ENCODE measurements at regions of chr21 and their contacts with region 1.

Region 1: DNA sequence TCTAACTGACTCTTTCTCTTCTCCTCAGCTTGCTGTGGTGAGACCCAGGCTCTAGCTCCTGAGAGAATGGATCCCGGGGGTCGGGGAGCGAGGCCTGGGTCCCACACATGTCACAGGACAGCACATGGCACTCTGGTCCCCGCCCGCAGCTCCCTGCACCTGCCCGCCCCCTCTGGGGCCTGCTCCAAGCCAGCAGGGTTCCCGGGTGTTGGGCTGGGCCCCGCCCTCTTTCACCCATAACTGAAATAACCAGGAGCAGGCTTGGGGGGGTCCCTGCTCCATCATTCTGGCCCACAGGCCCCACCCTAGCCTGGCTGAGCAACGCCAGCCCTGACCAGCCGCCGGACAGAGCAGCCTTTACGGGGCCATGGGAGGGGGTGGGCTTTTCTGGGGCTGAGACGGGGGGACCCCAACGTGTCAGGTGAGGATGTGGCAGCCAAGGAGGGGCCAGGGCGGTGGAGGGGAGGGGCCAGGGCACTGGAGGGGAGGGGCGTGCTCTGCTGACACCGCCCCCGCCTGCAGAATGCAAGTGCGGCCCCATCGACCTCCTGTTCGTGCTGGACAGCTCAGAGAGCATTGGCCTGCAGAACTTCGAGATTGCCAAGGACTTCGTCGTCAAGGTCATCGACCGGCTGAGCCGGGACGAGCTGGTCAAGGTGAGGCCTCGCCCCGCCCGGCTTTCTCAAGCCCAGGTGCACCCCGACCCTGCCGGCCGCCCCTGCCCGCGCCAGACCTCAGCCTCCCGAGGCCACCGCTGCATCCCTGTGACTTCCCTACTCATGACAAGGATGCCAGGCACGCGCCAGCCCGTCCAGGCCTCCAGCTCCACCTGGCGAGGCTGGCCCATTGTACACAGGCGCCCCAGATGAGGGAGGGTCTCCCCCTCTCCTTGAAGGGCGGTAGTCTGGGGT is 19.4 kb downstream of the COL6A1 start:
- DNase-seq: no peak
- H3K4me3 ChIP-seq: no peak overlapping the region
- CTCF ChIP-seq: no peak

Region 2: DNA sequence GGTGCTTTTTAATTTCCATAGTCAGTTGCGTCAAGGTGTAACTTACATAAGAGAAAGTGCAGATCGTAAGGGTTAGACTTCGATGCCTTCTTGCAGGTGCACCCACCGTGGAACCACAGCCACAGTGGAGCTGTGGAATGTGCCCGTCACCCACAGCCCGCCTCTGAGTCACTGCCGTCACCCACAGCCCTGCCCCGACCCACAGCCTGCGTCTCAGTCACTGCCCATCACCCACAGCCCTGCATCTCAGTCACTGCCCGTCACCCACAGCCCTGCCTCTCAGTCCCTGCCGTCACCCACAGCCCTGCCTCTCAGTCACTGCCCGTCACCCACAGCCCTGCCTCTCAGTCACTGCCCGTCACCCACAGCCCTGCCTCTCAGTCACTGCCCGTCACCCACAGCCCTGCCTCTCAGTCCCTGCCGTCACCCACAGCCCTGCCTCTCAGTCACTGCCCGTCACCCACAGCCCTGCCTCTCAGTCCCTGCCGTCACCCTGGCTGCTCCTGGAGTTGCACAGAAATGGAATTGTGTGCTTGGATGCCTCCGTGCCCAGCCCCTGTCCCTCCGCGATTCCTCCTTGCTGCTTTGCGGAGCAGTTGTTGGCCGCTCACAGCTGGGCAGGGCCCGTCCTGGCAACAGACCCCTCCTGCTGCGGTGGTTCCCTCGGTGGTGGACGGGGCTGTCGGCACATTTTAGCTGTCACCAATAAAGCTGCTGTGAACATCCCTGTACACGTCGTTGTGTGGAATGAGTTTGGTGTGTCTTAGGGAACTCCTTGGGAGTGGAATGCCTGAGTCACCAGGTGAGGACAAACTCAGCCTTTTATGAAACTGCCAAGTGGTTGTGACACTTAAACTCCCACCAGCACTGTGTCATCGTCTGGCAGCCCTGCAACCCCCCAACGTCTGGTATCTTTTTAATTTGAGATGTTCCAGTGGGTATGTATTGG is 52.0 kb after region 1 on chr21:
- in situ Hi-C with region 1: loop called (anchors 5 kb)
- DNase-seq: peak; percentile 67
- H3K4me3 ChIP-seq: no peak overlapping the region
- CTCF ChIP-seq: no peak

Region 3: GRCh38 chr21:46100426-46100825 is 99.4 kb after region 1 on chr21:
- in situ Hi-C with region 1: loop called (anchors 10 kb)
- DNase-seq: no peak
- H3K4me3 ChIP-seq: peak overlapping the region; percentile 84
- CTCF ChIP-seq: no peak

Region 4: GRCh38 chr21:46361935-46362334 is 360.9 kb after region 1 on chr21:
- in situ Hi-C with region 1: no loop called
- DNase-seq: no peak
- H3K4me3 ChIP-seq: no peak overlapping the region
- CTCF ChIP-seq: no peak